WTC11 (cell line): ENCODE measurements at regions of chr7 and their contacts with region 1.

Region 1: DNA sequence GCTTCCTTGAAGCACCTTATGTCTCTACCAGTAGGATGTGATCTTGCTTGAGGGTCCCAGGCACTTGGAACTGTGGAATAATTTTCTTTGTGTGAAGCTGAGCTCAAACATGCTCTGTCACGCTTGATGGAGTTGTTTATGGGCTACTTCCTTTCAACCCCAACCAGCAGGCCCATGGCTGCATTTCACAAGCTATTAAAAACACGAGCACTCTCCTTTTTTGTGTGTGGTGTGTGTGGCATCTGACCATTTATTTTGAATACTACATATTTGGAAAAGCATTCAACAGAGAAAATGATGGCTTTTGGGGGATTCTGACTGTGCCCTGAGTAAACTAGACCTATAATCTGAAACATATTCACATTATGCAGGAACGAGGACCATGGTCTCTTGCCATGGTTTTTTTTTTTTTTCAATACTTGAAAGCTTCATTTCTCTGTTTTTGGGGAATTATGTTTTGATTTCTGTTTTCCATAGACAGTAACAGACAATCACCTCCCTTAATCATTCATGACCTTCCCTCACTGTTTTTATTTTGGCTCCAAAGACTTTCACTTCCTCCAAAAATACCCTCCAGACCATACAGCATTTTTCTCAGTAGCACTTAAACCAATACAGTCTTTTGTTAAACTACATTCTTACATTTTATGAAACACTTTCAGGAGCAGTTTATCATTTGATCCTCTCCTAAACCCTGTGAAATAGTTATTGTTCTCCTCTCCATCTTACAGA is 233.6 kb upstream of the BMPER start:
- DNase-seq: no peak
- ATAC-seq: no peak
- H3K4me3 Mint-ChIP-seq: no peak overlapping the region
- H3K27ac Mint-ChIP-seq: no peak overlapping the region
- H3K4me1 Mint-ChIP-seq: peaks cover 44% of the 10 kb centered on the region
- H3K27me3 Mint-ChIP-seq: no peaks in the 10 kb centered on the region
- CTCF ChIP-seq: no peak

Region 2: DNA sequence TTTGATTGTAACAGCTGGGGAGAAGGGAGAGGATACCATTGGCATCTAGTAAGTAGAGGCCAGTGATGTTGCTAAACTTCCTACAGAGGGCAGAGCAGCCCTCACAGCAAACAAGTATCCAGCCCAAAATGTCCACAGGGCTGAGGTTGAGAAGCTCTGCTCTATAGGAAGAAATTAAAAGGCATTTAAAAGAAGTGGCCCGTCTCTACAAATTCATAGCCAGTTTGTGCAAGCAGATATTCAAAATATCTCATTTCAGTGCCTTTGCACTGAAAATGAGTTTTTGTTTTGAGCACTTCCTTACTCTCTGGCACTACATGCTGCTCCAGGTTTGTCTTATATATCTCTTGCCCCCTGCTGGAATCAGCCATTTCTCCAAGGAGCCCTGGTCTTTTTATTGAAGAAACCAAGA is 212.4 kb before region 1 on chr7:
- CTCF ChIA-PET with region 1: interaction called, 22 read pairs
- POLR2A ChIA-PET with region 1: no interaction called
- DNase-seq: peak; percentile 26
- ATAC-seq: peak; percentile 100
- H3K4me3 Mint-ChIP-seq: no peak overlapping the region
- H3K27ac Mint-ChIP-seq: no peak overlapping the region
- H3K4me1 Mint-ChIP-seq: peaks cover 4% of the 10 kb centered on the region; the same call in 1 of the 2 replicates
- H3K27me3 Mint-ChIP-seq: no peaks in the 10 kb centered on the region
- CTCF ChIP-seq: peak; percentile 18; the same call in 1 of the 2 replicates

Region 3: DNA sequence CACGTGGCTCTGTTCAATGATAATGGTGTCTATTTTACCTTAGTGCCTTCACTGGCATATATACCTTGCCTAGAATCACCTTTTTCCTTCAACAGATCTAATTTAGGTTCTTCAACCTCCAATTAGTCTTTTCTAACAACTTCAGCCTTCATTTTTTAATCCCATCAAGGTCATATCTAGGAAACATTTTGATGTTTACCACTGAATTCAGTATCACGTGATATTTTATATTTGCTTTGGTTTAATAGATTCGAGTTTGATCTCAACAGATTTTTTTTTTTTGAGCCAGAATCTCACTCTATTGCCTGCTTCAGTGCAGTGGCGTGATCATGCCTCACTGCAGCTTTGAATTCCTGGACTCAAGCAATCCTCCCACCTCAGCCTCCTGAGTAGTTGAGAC is 188.3 kb before region 1 on chr7:
- CTCF ChIA-PET with region 1: no interaction called
- POLR2A ChIA-PET with region 1: no interaction called
- DNase-seq: no peak
- ATAC-seq: no peak
- H3K4me3 Mint-ChIP-seq: no peak overlapping the region
- H3K27ac Mint-ChIP-seq: no peak overlapping the region
- H3K4me1 Mint-ChIP-seq: peaks cover 10% of the 10 kb centered on the region; the same call in 1 of the 2 replicates
- H3K27me3 Mint-ChIP-seq: no peaks in the 10 kb centered on the region
- CTCF ChIP-seq: no peak

Region 4: GRCh38 chr7:33650828-33651227 is 20.9 kb before region 1 on chr7:
- CTCF ChIA-PET with region 1: no interaction called
- POLR2A ChIA-PET with region 1: no interaction called
- DNase-seq: no peak
- ATAC-seq: no peak
- H3K4me3 Mint-ChIP-seq: no peak overlapping the region
- H3K27ac Mint-ChIP-seq: no peak overlapping the region
- H3K4me1 Mint-ChIP-seq: peaks cover 24% of the 10 kb centered on the region
- H3K27me3 Mint-ChIP-seq: no peaks in the 10 kb centered on the region
- CTCF ChIP-seq: no peak

Region 5: DNA sequence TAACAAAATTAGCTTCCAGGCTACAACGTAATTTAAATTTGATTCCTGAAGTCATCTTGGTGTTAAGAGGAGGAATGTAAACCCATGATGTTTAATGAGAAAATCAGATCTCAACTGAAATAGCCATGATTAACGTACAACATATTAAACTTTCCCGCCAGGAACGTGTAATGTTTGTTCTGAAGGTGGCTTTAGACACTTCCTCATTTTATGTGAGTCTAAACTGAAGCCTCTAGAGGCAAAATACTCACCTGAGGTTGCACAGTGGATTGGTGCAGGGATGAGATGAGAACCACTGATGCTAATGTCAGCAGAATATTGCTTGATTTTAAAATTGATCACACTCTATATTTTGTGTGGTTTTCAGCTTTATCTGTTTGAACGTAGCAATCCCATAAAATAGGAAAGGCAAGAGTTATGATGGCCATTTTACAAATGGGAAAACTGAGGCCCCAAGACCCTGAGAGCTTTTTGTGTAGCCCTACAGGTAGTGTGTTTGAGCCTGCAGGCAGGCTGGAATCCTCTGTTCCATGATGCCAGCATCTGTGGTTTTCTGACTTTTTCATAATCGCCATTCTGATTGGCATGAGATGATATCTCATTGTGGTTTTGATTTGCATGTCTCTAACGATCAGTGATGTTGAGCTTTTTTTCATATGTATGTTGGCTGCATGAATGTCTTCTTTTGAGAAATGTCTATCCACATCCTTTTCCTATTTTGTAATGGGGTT is 10.1 kb before region 1 on chr7:
- CTCF ChIA-PET with region 1: interaction called, 13 read pairs
- POLR2A ChIA-PET with region 1: no interaction called
- DNase-seq: no peak
- ATAC-seq: no peak
- H3K4me3 Mint-ChIP-seq: no peak overlapping the region
- H3K27ac Mint-ChIP-seq: no peak overlapping the region
- H3K4me1 Mint-ChIP-seq: no peaks in the 10 kb centered on the region
- H3K27me3 Mint-ChIP-seq: no peaks in the 10 kb centered on the region
- CTCF ChIP-seq: no peak

Region 6: GRCh38 chr7:33685981-33686683 is 14.4 kb after region 1 on chr7:
- CTCF ChIA-PET with region 1: interaction called, 15 read pairs
- POLR2A ChIA-PET with region 1: no interaction called
- DNase-seq: peak; percentile 17
- ATAC-seq: peak; percentile 84
- H3K4me3 Mint-ChIP-seq: no peak overlapping the region
- H3K27ac Mint-ChIP-seq: no peak overlapping the region
- H3K4me1 Mint-ChIP-seq: no peaks in the 10 kb centered on the region
- H3K27me3 Mint-ChIP-seq: no peaks in the 10 kb centered on the region
- CTCF ChIP-seq: no peak

Region 7: DNA sequence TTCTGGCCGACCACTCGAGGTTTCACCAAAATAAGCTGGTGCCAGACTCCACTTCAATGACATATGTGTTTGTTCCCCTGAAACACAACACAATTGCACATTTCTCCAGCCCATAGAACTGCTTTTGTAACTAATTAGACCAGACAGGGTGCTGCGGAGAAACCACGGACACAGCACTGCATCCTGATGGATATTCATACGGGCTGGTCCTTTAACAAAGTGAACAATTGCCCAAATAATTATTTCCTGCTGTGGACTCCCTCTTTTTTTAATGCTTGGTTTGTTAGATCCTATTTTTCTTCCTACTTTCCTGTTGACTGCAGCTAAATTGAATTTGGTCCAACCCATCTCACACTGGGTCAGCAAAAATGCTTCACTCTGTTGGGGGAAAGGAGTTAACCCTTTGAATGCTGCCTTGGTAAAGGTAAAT is 35.1 kb after region 1 on chr7:
- CTCF ChIA-PET with region 1: interaction called, 16 read pairs
- POLR2A ChIA-PET with region 1: no interaction called
- DNase-seq: no peak
- ATAC-seq: no peak
- H3K4me3 Mint-ChIP-seq: no peak overlapping the region
- H3K27ac Mint-ChIP-seq: no peak overlapping the region
- H3K4me1 Mint-ChIP-seq: peaks cover 62% of the 10 kb centered on the region
- H3K27me3 Mint-ChIP-seq: peaks cover 40% of the 10 kb centered on the region
- CTCF ChIP-seq: no peak